A673 (cell line): ENCODE measurements at regions of chr1 and their contacts with region 1.

Region 1: GRCh38 chr1:158203693-158204457 is 23.2 kb downstream of the CD1D start:
- DNase-seq: peak; percentile 84
- H3K4me3 ChIP-seq: peak overlapping the region; percentile 28
- H3K27ac ChIP-seq: no peak overlapping the region
- H3K4me1 ChIP-seq: no peaks in the 10 kb centered on the region
- H3K27me3 ChIP-seq: peaks cover 28% of the 10 kb centered on the region
- CTCF ChIP-seq: peak; percentile 88

Region 2: DNA sequence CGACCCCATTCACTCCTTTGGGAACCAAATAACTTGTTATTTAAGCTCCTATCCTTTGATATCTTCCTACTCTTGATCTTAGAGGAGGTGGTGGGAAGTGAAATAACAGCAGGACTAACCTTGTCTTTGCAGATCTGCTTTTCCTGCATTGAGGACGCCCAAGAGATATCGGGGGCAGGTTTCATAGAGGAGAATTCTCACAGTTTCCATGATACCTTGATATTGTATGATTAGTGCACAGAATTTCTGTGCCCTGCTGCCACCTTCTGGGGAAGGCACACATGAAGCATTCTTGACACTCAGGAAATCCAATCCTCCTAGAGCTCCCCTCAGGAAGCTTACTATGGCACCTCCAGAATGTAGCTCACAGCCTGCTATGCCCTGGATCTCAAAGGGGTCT is 125.9 kb after region 1 on chr1:
- CTCF ChIA-PET with region 1: interaction called, 19 read pairs
- POLR2A ChIA-PET with region 1: no interaction called
- intact Hi-C with region 1: loop called (anchors 5 kb)
- DNase-seq: peak; percentile 38
- H3K4me3 ChIP-seq: no peak overlapping the region
- H3K27ac ChIP-seq: no peak overlapping the region
- H3K4me1 ChIP-seq: no peaks in the 10 kb centered on the region
- H3K27me3 ChIP-seq: peaks cover 13% of the 10 kb centered on the region
- CTCF ChIP-seq: peak; percentile 56

Region 3: DNA sequence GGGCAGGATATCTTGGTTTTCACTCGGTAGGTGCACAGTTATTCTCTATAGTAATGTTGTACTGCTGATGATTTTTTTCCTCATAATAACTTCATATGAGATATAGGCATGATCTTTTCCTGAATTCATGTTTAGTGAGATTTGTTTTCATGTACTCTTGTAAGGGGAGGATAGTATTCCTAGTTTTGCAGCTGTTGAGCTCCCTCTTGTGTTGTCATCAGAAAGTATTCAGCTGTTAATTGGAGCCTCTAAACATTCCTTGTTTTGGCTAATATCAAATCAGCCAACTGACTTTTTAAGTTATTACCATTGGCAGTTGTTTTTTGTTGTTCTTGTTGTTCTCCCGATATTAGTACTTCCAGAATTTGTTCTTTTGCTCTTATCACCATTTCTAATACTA is 292.5 kb after region 1 on chr1:
- CTCF ChIA-PET with region 1: interaction called, 6 read pairs
- POLR2A ChIA-PET with region 1: no interaction called
- intact Hi-C with region 1: loop called (anchors 5 kb)
- DNase-seq: peak; percentile 42
- H3K4me3 ChIP-seq: no peak overlapping the region
- H3K27ac ChIP-seq: no peak overlapping the region
- H3K4me1 ChIP-seq: no peaks in the 10 kb centered on the region
- H3K27me3 ChIP-seq: peaks cover 51% of the 10 kb centered on the region
- CTCF ChIP-seq: peak; percentile 50

Region 4: GRCh38 chr1:158998781-158999161 is 794.9 kb after region 1 on chr1:
- CTCF ChIA-PET with region 1: no interaction called
- POLR2A ChIA-PET with region 1: no interaction called
- intact Hi-C with region 1: loop called (anchors 5 kb)
- DNase-seq: peak; percentile 71
- H3K4me3 ChIP-seq: peak overlapping the region; percentile 56
- H3K27ac ChIP-seq: peak overlapping the region; percentile 60
- H3K4me1 ChIP-seq: peaks cover 26% of the 10 kb centered on the region
- H3K27me3 ChIP-seq: no peaks in the 10 kb centered on the region
- CTCF ChIP-seq: peak; percentile 91

Region 5: DNA sequence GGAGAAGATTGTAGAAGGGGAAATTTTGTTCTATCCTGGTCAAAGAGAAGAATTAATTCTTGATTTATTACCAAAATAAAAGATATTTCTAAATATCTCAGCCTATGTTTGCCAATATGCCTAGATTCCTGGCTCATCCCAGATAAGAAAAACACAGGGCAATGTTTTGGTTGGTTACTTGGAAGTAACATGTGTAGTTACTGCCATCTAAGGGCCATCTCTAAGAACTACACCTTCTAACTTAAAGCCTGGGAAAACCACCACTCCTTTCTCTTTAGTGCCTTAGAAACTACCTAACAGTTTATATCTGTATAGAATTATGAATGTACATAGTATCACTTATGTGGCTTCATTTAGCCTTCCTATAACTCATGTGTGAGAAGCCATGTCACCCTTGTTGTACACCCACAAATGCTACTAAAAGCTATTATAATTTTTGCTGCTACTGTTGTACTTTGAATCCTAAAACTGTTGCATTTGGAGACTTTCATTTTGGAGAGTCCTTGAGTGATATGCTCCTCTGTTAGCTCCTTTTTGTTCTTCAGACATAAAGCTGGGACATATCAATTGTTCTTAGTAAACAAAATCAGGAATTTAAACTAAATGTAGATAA is 868.2 kb after region 1 on chr1:
- CTCF ChIA-PET with region 1: no interaction called
- POLR2A ChIA-PET with region 1: no interaction called
- intact Hi-C with region 1: loop called (anchors 5 kb)
- DNase-seq: peak; percentile 72
- H3K4me3 ChIP-seq: no peak overlapping the region
- H3K27ac ChIP-seq: no peak overlapping the region
- H3K4me1 ChIP-seq: no peaks in the 10 kb centered on the region
- H3K27me3 ChIP-seq: peaks cover 8% of the 10 kb centered on the region
- CTCF ChIP-seq: peak; percentile 77